ENCODE measurements at regions of chr16 and their contacts with region 1.

Region 1: DNA sequence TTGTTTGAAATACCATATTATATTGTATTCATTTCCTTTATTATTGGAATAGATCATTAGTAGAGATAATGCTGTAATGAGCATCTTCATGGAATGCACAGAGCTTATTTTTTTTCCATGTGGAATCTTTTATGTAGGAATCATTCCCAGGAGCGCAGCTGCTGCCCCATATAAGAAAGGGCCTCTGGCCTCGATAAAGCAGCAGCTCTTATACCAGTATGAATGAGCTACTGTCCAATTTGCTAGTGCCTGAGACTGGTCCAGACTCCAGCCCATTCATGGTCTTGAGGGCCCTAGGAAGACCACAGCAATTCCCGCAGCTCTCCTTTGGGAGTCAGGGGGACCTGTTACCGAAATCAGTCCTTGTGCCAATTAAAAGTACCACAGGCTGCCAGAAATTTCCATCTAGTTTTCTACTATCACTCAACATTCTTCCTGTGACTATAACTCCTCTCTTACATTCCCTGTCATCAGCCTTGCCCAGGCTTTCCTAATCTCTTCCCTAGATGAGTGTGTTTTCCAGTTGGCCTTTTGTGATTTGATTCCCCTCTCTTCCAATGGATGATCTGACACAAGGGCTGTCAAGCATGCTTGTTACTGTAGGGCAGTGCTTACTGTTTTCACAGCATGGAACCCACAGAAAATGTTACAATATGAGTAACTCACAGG is 1.9 kb downstream of the ZNF843 start:
- DNase-seq: no peak
- ATAC-seq: no peak
- H3K4me3 ChIP-seq: no peak overlapping the region
- H3K27ac ChIP-seq: peak overlapping the region; percentile 87 to 99 (median 96)
- H3K4me1 ChIP-seq: peaks cover 19 to 21% of the 10 kb centered on the region in 2 donors
- H3K27me3 ChIP-seq: no peaks in the 10 kb centered on the region
- CTCF ChIP-seq: no peak
- POLR2A ChIP-seq: no peak

Region 2: GRCh38 chr16:31108035-31108793 is 332.4 kb before region 1 on chr16 and contains the start of gene BCKDK:
- in situ Hi-C with region 1: loop called in 1 of 4 experiments (anchors 10 kb)
- intact Hi-C with region 1: no loop called
- DNase-seq: peak; percentile 52 to 70
- ATAC-seq: peak; percentile 50
- H3K4me3 ChIP-seq: peak within 1 kb of the TSS; percentile 74 to 98 (median 92)
- H3K27ac ChIP-seq: peak within 1 kb of the TSS; percentile 85 to 100 (median 97)
- H3K4me1 ChIP-seq: peaks cover 35 to 43% of the 10 kb centered on the region in 2 donors
- H3K27me3 ChIP-seq: no peaks in the 10 kb centered on the region
- CTCF ChIP-seq: no peak
- POLR2A ChIP-seq: peak; percentile 71 to 81
- total RNA-seq, gene BCKDK: 24.7 to 68.9 (median 50.9) TPM

Region 3: GRCh38 chr16:31382485-31383161 is 58.0 kb before region 1 on chr16:
- in situ Hi-C with region 1: loop called in 1 of 4 experiments (anchors 10 kb)
- intact Hi-C with region 1: loop called (anchors 1 kb)
- DNase-seq: peak; percentile 30 to 51
- ATAC-seq: peak; percentile 61 to 83
- H3K4me3 ChIP-seq: no peak overlapping the region
- H3K27ac ChIP-seq: no peak overlapping the region
- H3K4me1 ChIP-seq: no peaks in the 10 kb centered on the region
- H3K27me3 ChIP-seq: no peaks in the 10 kb centered on the region
- CTCF ChIP-seq: peak; percentile 57 to 75 (median 61)
- POLR2A ChIP-seq: no peak

Measured in gastrocnemius medialis (tissue), 4 donors.